HCT116 (cell line): ENCODE measurements at regions of chr1 and their contacts with region 1.

Region 1: GRCh38 chr1:205273551-205273982 is 45.8 kb downstream of the TMCC2 start:
- DNase-seq: peak; percentile 48
- ATAC-seq: peak; percentile 79
- H3K4me3 ChIP-seq: no peak overlapping the region
- H3K27ac ChIP-seq: no peak overlapping the region
- H3K4me1 ChIP-seq: peaks cover 17 to 34% of the 10 kb centered on the region in 2 experiments
- H3K27me3 ChIP-seq: no peaks in the 10 kb centered on the region
- CTCF ChIP-seq: peak; percentile 97 to 99 (median 98)
- POLR2A ChIP-seq: no peak
- RAD21 ChIP-seq: peak; percentile 100

Region 2: DNA sequence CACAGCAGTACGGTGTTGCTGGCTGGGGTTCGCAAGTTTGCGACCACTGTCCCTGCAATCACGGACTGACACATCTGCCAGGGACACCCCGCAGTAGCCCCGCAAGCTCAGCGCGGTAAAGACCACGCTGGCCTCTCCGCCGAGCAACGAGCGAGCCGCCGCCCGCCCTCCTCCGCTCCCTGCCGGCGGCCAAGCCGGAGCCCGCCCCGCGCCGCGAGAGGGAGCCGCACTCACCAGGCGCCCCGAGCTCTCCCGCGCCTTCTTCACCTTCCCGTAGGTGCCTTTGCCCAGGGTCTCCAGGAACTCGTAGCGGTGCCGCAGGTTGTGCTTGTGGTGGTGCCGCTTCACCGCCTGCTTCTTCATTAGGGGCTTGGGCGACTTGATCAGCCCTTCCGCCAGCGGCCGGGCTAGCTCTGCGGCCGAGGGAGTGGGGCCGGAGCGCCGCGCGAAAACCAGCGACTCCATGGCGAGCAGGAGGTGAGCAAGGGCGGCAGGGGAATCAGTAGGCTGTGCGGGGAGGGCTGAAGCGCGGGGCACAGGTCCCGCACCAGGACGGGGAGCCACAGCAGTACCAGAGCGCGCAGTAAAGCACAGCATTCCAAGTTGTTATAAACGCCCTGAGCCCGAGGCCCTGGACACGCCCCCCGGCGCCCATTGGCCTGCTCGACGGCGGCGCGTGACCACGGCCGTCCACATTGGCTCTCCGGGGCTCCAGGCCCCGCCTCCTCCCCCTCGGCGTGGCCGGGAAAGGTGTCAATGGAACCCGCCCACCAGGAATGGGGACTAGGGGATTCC is 47.8 kb after region 1 on chr1 and contains the start of gene NUAK2:
- CTCF ChIA-PET with region 1: interaction called, 397 read pairs
- POLR2A ChIA-PET with region 1: interaction called, 16 read pairs
- RAD21 ChIA-PET with region 1: interaction called, 57 to 60 read pairs
- intact Hi-C with region 1: loop called (anchors 1 kb)
- DNase-seq: peak; percentile 80
- ATAC-seq: peak; percentile 92
- H3K4me3 ChIP-seq: peak within 1 kb of the TSS; percentile 78 to 95
- H3K27ac ChIP-seq: peak within 1 kb of the TSS; percentile 77
- H3K4me1 ChIP-seq: peaks cover 44 to 62% of the 10 kb centered on the region in 2 experiments
- H3K27me3 ChIP-seq: no peaks in the 10 kb centered on the region
- CTCF ChIP-seq: peak in 2 of 3 experiments; percentile 14 to 29; a peak in 3 of 6 replicates
- POLR2A ChIP-seq: peak; percentile 68
- RAD21 ChIP-seq: no peak
- total RNA-seq, gene NUAK2: 3.0 TPM

Region 3: GRCh38 chr1:205354259-205354904 is 80.8 kb after region 1 on chr1:
- CTCF ChIA-PET with region 1: interaction called, 25 read pairs
- POLR2A ChIA-PET with region 1: no interaction called
- RAD21 ChIA-PET with region 1: interaction called in 1 of 2 experiments, 4 read pairs
- intact Hi-C with region 1: no loop called
- DNase-seq: peak; percentile 54
- ATAC-seq: peak; percentile 80
- H3K4me3 ChIP-seq: no peak overlapping the region
- H3K27ac ChIP-seq: no peak overlapping the region
- H3K4me1 ChIP-seq: peaks cover 2 to 23% of the 10 kb centered on the region in 2 experiments; a peak in 3 of 4 replicates
- H3K27me3 ChIP-seq: no peaks in the 10 kb centered on the region
- CTCF ChIP-seq: peak; percentile 75 to 86 (median 84)
- POLR2A ChIP-seq: no peak
- RAD21 ChIP-seq: peak; percentile 74

Region 4: GRCh38 chr1:205528887-205529825 is 255.6 kb after region 1 on chr1:
- CTCF ChIA-PET with region 1: interaction called, 23 read pairs
- POLR2A ChIA-PET with region 1: no interaction called
- RAD21 ChIA-PET with region 1: no interaction called
- intact Hi-C with region 1: loop called (anchors 10 kb)
- DNase-seq: peak; percentile 19
- ATAC-seq: peak; percentile 90
- H3K4me3 ChIP-seq: no peak overlapping the region
- H3K27ac ChIP-seq: no peak overlapping the region
- H3K4me1 ChIP-seq: peaks cover 0 to 4% of the 10 kb centered on the region in 2 experiments; a peak in 1 of 4 replicates
- H3K27me3 ChIP-seq: no peaks in the 10 kb centered on the region
- CTCF ChIP-seq: peak; percentile 74 to 89 (median 86)
- POLR2A ChIP-seq: no peak
- RAD21 ChIP-seq: peak; percentile 83